Cardiac septum (tissue), 1 donor: ENCODE measurements at regions of chr2 and their contacts with region 1.

Region 1: GRCh38 chr2:202634556-202635427 is at the start of gene FAM117B:
- DNase-seq: peak; percentile 98
- total RNA-seq, gene FAM117B: 1.2 TPM

Region 2: DNA sequence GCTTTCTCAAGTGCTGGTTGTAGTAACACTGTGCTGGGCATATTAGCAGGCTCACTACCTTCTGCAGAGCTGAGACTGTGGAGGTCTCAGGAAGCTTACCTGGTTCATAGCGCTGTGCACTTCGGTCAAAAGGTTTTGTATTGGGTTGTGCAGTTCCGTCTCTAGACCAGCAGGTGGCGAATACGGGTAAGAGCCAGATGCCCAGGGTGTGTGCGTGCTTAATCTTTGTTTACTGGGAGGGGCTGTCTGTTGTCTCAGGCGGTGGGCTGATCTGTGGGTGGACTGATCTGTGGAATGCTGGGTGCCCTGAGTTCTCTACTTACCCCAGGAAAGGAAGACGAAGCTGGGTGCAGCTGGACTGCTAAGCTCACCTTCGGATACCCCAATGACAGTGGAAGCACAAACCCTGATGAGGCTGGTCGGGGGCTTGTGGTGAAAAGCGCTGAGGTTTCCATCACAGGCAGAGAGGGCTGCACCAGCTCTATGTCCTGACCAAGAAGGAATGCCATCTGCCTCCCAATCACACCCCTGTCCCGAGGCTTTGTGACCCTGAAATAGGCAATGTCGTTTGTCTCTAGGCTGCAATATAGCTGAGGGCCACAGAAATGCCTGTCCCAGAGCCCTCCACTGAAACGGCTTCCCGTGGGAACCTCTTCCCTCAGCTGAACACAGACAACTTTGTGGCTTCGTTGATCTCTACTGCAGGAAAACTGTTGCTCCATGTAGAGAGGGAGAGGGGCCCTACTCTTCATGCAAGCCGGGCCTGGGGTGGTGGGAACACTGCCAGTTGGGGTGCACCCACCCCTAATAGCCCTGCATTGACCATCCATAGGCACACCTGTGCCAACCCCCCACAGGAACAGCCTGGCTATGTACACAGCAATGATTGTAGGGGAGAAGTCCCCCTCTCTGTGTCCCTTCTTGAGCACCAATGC is 45.9 kb before region 1 on chr2:
- intact Hi-C with region 1: loop called (anchors 5 kb)
- DNase-seq: peak; percentile 80